Posterior vena cava (tissue), 2 donors: ENCODE measurements at regions of chr6 and their contacts with region 1.

Region 1: GRCh38 chr6:16391451-16391912 is 153.1 kb downstream of the GMPR start:
- DNase-seq: no peak

Region 2: GRCh38 chr6:15893556-15894268 is 497.8 kb before region 1 on chr6:
- intact Hi-C with region 1: loop called in 1 of 2 experiments (anchors 5 kb)
- DNase-seq: no peak